Left cardiac atrium (tissue), 4 donors: ENCODE measurements at regions of chr6 and their contacts with region 1.

Region 1: GRCh38 chr6:156776840-156777576 is at the start of gene ARID1B:
- DNase-seq: peak; percentile 87
- ATAC-seq: peak; percentile 75 to 80
- total RNA-seq, gene ARID1B: 45.4 to 48.0 TPM

Region 2: GRCh38 chr6:156686995-156687788 is 89.8 kb before region 1 on chr6:
- intact Hi-C with region 1: loop called in 1 of 2 experiments (anchors 5 kb)
- DNase-seq: peak; percentile 91
- ATAC-seq: peak; percentile 94 to 95

Region 3: DNA sequence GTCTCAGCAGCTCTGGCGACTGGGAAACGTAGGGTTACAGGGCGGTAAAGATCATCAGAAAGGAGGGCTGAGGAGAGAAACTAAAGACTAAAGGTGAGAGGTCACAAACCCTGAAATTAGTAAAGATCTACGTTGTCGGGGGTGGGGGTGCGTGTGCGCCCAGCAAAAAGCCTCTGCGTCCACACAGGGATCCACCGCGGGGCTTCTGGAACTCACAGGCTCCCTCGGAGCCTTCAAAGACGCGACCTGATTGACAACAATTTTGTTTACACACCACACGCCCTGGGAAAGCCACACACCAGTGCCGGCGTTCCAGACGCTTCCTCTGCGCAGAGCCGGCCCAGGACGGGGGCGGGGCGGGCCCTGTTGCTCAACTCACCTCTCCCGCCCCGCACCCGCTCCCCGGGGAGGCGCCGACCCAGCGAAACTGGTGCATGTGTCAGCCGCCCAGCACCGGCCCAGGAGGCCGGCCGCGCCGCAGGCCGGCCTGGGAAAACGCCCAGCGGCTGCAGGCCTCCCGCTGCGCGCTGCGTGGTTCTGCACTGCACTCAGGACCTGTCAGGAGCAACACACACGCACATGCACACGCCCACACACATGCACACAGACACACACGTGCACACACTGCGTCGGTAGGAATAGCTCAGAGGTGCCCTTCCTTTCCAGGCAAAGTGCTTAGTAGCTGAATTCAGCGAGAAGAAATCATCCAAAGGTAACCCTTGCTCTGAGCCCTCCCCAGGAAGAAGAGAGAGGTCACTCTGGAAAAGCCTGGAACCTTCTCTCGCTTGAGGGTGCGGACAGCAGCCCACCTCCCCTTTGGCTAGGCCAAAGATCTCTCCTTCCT is 57.1 kb before region 1 on chr6:
- intact Hi-C with region 1: loop called in 1 of 2 experiments (anchors 5 kb)
- DNase-seq: peak; percentile 96
- ATAC-seq: peak; percentile 97 to 99

Region 4: GRCh38 chr6:157021344-157021992 is 244.5 kb after region 1 on chr6:
- intact Hi-C with region 1: loop called (anchors 5 to 10 kb)
- DNase-seq: peak; percentile 91
- ATAC-seq: peak; percentile 93 to 95